ENCODE measurements at regions of chr3 and their contacts with region 1.

Region 1: GRCh38 chr3:189233225-189233858 is 61.6 kb downstream of the TPRG1 start:
- DNase-seq: peak; percentile 84
- ATAC-seq: peak; percentile 98
- H3K4me3 ChIP-seq: no peak overlapping the region
- H3K27ac ChIP-seq: no peak overlapping the region
- H3K4me1 ChIP-seq: no peaks in the 10 kb centered on the region
- H3K27me3 ChIP-seq: no peaks in the 10 kb centered on the region
- CTCF ChIP-seq: peak; percentile 88

Region 2: DNA sequence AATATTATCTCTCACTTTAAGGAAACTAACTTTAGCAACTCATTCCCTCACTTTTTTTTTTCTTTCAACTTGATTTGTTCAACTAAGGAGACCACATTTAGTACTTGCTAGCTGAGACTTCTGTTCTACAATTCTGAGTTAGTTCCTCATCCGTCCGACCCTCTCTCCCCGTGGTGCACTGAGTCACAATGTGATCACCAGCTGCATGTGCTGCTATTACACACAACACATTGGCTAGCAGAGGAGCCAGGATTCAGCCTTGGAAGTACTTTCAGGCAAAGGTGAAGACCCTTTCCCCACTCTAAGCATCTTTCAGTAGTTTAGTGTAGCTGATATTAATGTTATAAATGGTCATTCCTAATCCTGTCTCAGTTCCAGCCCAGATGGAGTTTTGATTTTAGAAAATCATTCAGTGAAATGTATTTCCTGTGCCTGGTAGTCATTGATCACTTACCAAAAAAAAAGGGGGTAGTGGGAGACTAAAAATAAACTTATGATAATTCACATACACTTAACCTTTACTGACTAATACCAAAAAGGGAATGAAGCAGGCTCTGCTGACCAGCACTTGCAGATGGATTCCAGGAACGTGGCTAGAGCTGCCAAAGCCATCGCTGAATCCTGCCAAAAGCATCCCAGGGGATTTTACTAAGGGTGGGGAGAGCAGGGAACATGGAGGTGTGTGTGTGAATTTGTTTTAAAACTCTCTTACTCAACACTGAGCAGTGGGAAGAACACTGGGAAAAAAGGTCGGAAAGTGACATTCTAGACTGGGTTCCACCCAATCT is 654.6 kb before region 1 on chr3:
- CTCF ChIA-PET with region 1: no interaction called
- POLR2A ChIA-PET with region 1: no interaction called
- intact Hi-C with region 1: no loop called
- DNase-seq: peak; percentile 38
- ATAC-seq: no peak
- H3K4me3 ChIP-seq: no peak overlapping the region
- H3K27ac ChIP-seq: no peak overlapping the region
- H3K4me1 ChIP-seq: peaks cover 12% of the 10 kb centered on the region
- H3K27me3 ChIP-seq: no peaks in the 10 kb centered on the region
- CTCF ChIP-seq: no peak

Region 3: GRCh38 chr3:189167027-189167766 is 66.1 kb before region 1 on chr3:
- CTCF ChIA-PET with region 1: no interaction called
- POLR2A ChIA-PET with region 1: no interaction called
- intact Hi-C with region 1: loop called (anchors 5 kb)
- DNase-seq: peak; percentile 85
- ATAC-seq: peak; percentile 98
- H3K4me3 ChIP-seq: no peak overlapping the region
- H3K27ac ChIP-seq: peak overlapping the region; percentile 7; the same call in 1 of the 2 replicates
- H3K4me1 ChIP-seq: peaks cover 19% of the 10 kb centered on the region
- H3K27me3 ChIP-seq: no peaks in the 10 kb centered on the region
- CTCF ChIP-seq: no peak

Measured in PC-3 (cell line).